WTC11 (cell line): ENCODE measurements at regions of chr20 and their contacts with region 1.

Region 1: DNA sequence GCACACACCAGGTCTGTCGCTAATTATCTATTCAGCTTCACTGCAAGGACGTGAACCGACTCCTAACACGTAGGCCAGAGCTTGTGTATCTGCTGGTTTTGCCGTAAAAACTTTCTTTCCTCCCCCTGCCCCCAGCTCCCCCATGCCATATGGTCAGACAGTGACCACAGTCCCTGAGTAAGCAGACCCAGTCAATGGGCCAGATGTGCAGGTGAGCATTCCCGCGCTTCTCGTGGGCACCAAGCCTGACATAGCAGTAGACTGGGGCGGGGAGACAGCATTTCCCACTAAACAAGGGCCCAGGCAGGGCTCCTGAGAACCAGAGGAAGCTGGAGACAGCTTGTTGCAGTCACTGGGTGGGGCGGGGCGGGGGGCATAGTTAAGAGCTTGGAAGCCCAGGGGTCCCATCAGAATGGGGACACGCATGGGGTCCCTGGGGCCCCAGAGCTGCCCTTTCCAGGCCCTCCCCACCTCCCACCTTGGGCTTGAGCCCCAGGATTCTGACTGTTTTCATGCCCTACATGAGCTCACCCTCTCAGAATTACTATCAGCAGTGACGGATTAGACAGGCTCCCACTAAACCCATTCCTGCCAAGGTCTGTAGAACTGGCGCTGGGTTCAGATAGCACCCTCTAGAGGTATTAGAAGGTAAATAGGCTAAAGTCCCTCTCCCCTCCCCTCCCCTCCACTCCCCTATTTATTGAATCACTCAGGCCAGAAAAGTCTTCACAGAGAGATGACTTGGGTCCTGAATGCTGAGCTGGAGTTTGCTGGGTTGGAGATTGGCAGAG is 51.8 kb downstream of the CDH26 start:
- DNase-seq: no peak
- ATAC-seq: peak; percentile 96
- H3K4me3 Mint-ChIP-seq: no peak overlapping the region
- H3K27ac Mint-ChIP-seq: no peak overlapping the region
- H3K4me1 Mint-ChIP-seq: no peaks in the 10 kb centered on the region; the same call in 1 of the 2 replicates
- H3K27me3 Mint-ChIP-seq: peaks cover 28% of the 10 kb centered on the region
- CTCF ChIP-seq: peak; percentile 46

Region 2: DNA sequence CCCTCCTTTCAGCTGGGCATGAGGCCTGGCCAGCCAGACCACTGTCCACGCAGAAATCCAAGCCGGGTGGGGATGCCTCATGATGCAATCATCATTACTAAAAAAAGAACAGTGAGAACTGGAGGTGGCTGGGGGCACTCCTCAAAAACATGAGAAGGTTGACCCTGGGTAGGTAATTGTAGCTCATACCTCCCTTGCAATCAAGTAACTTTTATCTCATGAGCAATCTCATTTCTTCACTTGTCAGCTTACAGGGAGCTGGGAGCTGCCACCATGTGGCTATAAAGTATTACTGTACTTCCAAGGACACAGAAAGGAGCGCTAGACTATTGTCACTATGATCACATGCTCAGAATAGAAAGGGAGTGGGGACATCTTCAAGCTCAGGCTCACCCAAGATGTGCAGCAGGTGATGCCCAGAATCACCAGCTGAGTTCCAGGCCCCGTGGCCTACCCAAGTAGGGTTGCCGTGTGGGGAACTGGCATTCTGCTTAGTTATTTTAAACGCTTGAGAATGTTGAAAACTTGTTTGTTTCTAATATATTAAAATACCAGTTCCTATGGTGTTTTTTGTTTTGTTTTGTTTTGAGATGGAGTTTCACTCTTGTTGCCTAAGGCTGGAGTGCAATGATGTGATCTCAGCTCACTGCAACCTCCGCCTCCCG is 54.8 kb before region 1 on chr20:
- CTCF ChIA-PET with region 1: interaction called, 10 read pairs
- POLR2A ChIA-PET with region 1: no interaction called
- DNase-seq: no peak
- ATAC-seq: peak; percentile 39; the same call in 1 of the 2 replicates
- H3K4me3 Mint-ChIP-seq: no peak overlapping the region
- H3K27ac Mint-ChIP-seq: peak overlapping the region; percentile 49; the same call in 1 of the 2 replicates
- H3K4me1 Mint-ChIP-seq: peaks cover 6% of the 10 kb centered on the region
- H3K27me3 Mint-ChIP-seq: peaks cover 8% of the 10 kb centered on the region
- CTCF ChIP-seq: no peak

Region 3: GRCh38 chr20:59994697-59995122 is 15.3 kb before region 1 on chr20:
- CTCF ChIA-PET with region 1: interaction called, 23 read pairs
- POLR2A ChIA-PET with region 1: no interaction called
- DNase-seq: peak; percentile 78
- ATAC-seq: peak; percentile 97
- H3K4me3 Mint-ChIP-seq: peak overlapping the region; percentile 69
- H3K27ac Mint-ChIP-seq: peak overlapping the region; percentile 94
- H3K4me1 Mint-ChIP-seq: peaks cover 35% of the 10 kb centered on the region
- H3K27me3 Mint-ChIP-seq: peaks cover 14% of the 10 kb centered on the region
- CTCF ChIP-seq: no peak